ENCODE measurements at regions of chr3 and their contacts with region 1.

Region 1: DNA sequence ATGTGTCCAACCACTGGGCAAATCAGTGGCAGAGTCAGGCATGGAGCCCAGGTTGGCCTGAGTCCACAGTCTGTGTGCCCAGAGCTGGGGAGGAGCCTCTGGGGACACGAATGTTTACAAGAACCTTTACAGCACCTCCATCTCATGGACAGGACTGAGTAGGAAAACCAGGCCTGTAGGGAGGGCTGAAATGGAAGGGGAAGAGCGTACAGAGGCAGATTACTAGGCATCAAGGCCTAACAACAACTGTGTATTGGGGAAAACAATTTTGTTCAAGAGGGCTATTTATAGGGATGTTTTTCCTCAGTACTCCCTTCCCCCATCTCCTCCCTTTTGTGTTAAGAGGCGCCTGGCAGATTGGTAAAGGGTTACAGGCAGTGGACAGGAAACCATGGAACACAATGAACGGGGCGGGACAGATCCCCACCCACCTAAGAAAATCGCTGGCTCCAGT is 15.1 kb upstream of the ARHGAP31 start:
- DNase-seq: no peak
- H3K4me3 ChIP-seq: no peak overlapping the region
- H3K27ac ChIP-seq: no peak overlapping the region
- H3K4me1 ChIP-seq: peaks cover 10% of the 10 kb centered on the region
- H3K27me3 ChIP-seq: no peaks in the 10 kb centered on the region
- CTCF ChIP-seq: no peak
- POLR2A ChIP-seq: no peak

Region 2: DNA sequence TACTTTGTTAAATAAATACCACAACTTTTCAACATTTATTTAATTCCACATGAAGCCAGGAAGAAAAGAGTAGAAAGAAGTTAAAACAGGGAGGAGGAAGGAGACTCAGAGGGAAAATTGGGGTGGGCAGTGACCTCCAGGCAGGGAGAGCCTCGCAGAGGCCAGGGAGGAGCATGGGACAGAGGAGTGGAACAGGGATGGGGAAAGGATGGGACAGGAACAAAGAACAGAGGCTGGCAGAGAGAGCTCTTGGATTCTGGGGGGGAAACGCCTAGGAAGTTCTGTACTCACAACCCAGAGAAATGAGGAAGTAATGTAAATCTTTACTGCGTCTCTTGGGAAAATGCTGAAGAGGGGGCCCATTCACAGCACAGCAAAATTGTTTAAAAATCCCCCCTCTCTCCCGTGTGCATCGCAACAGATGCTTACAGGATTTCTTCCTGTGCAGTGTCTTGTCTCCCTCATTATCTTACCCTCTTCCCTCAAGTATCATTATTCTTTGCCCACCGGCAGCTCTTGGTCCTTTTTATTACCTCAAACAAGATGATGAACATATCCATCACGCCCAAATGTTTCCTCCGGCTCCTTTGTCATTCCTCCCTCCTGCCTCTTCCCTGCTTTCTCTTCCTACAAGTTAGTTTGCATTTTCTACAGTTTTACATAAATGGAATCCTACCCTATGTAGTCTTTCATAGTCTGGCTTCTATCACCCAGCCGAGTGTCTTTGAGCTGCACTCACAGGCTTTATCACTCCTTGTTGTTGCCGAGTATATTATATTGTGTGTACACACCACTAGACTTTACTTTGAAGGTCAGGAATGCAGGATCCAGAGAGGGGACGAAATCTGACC is 80.6 kb after region 1 on chr3:
- intact Hi-C with region 1: loop called (anchors 5 kb)
- DNase-seq: no peak
- H3K4me3 ChIP-seq: no peak overlapping the region
- H3K27ac ChIP-seq: no peak overlapping the region
- H3K4me1 ChIP-seq: peaks cover 4% of the 10 kb centered on the region
- H3K27me3 ChIP-seq: no peaks in the 10 kb centered on the region
- CTCF ChIP-seq: no peak
- POLR2A ChIP-seq: no peak